ENCODE measurements at regions of chr17 and their contacts with region 1.

Region 1: GRCh38 chr17:40086150-40087044 is 14.0 kb downstream of the NR1D1 start:
- DNase-seq: peak; percentile 70
- H3K4me3 Mint-ChIP-seq: no peak overlapping the region
- H3K27ac Mint-ChIP-seq: no peak overlapping the region
- H3K4me1 Mint-ChIP-seq: no peaks in the 10 kb centered on the region
- H3K27me3 Mint-ChIP-seq: no peaks in the 10 kb centered on the region

Region 2: DNA sequence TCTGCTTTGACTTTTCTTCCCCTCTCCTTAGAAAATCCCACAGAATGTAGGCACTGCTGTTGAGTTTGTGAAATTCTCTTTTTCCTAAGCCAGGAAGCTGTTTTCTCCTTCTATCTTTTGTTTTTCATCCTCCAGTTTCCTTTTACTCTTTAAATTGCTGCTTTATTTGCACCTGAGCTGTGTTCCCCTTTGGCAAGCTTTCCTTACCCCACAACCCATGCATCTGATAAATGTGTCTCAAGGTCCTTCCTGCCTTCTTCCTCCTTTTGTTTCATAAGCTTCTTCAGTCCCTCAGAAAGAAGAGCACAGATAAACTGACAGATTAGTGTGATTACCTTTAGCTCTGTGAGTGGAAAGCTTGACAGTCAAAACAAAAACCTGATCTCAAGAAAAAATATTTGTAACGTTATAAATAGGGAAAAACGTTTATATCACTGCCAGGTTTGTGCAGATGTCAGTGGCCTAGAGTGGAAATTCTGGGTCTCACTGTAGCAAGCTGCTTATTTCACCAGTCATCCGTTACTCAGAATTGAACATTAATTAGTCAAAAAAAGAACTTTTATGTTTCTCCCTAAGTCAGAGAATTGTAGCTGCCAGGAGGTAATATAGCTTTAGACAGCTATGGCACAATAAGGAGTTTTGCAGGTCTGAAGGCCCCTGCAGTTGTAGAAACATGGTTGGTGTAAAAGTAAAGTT is 191.6 kb before region 1 on chr17:
- CTCF ChIA-PET with region 1: no interaction called
- DNase-seq: no peak
- H3K4me3 Mint-ChIP-seq: no peak overlapping the region
- H3K27ac Mint-ChIP-seq: no peak overlapping the region
- H3K4me1 Mint-ChIP-seq: peaks cover 6% of the 10 kb centered on the region
- H3K27me3 Mint-ChIP-seq: peaks cover 19% of the 10 kb centered on the region

Region 3: DNA sequence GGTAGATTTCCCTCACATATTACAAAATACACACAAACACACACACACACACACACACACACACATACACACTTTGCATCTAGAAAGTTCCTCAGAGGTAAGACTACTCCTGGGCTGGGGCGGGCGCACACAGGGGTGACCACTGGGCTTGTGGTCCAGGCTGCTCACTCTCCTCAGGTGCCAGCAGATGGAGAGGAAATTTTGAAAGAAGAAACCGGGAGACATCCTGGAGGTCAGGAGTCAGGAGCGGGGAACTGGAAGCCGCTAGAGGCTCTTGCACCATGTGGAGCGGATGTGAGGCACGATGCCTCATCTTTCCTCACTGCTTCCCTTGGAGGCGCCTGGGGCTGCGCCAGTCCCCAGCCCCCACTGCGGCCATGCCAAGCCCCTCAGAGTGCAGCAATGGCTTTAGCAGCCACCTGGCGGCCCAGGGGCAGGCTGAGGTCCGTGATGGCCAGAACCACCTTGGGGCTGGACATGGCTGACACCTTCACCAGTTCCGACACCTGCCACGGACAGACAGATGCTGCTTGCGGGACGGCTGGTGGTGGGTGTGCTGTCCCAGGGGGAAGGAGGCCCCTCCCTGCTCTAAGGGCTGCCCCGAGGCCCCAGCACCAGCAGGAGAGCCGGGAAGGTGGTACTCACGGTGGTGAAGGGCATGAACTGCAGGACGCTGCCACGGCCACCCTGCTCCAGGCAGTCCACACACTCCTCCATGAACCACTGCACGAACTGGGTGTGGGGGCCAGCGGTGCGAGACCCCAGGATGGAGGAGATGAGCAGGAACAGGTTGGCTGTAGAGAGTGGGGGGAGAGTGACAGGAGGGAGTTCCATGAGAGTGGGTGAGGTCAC is 67.0 kb before region 1 on chr17:
- CTCF ChIA-PET with region 1: interaction called, 18 read pairs
- DNase-seq: no peak
- H3K4me3 Mint-ChIP-seq: no peak overlapping the region
- H3K27ac Mint-ChIP-seq: peak overlapping the region; percentile 58
- H3K4me1 Mint-ChIP-seq: peaks cover 2% of the 10 kb centered on the region
- H3K27me3 Mint-ChIP-seq: peaks cover 11% of the 10 kb centered on the region

Region 4: GRCh38 chr17:40026816-40027613 is 59.4 kb before region 1 on chr17:
- CTCF ChIA-PET with region 1: interaction called, 11 read pairs
- DNase-seq: peak; percentile 84
- H3K4me3 Mint-ChIP-seq: no peak overlapping the region
- H3K27ac Mint-ChIP-seq: no peak overlapping the region
- H3K4me1 Mint-ChIP-seq: peaks cover 26% of the 10 kb centered on the region
- H3K27me3 Mint-ChIP-seq: no peaks in the 10 kb centered on the region

Region 5: GRCh38 chr17:40035162-40035559 is 51.2 kb before region 1 on chr17:
- CTCF ChIA-PET with region 1: interaction called, 10 read pairs
- DNase-seq: no peak
- H3K4me3 Mint-ChIP-seq: no peak overlapping the region
- H3K27ac Mint-ChIP-seq: no peak overlapping the region
- H3K4me1 Mint-ChIP-seq: no peaks in the 10 kb centered on the region
- H3K27me3 Mint-ChIP-seq: no peaks in the 10 kb centered on the region

Region 6: GRCh38 chr17:40062329-40063186 is 23.8 kb before region 1 on chr17 and contains the start of gene THRA:
- CTCF ChIA-PET with region 1: interaction called, 11 read pairs
- DNase-seq: peak; percentile 77
- H3K4me3 Mint-ChIP-seq: peak within 1 kb of the TSS; percentile 82
- H3K27ac Mint-ChIP-seq: peak within 1 kb of the TSS; percentile 24
- H3K4me1 Mint-ChIP-seq: peaks cover 39% of the 10 kb centered on the region
- H3K27me3 Mint-ChIP-seq: peaks cover 71% of the 10 kb centered on the region

Region 7: GRCh38 chr17:40075201-40075941 is 11.0 kb before region 1 on chr17:
- CTCF ChIA-PET with region 1: interaction called, 42 read pairs
- DNase-seq: peak; percentile 73
- H3K4me3 Mint-ChIP-seq: no peak overlapping the region
- H3K27ac Mint-ChIP-seq: peak overlapping the region; percentile 72
- H3K4me1 Mint-ChIP-seq: peaks cover 18% of the 10 kb centered on the region
- H3K27me3 Mint-ChIP-seq: peaks cover 3% of the 10 kb centered on the region

Region 8: GRCh38 chr17:40098846-40099618 is 12.6 kb after region 1 on chr17:
- CTCF ChIA-PET with region 1: interaction called, 10 read pairs
- DNase-seq: peak; percentile 99
- H3K4me3 Mint-ChIP-seq: peak overlapping the region; percentile 81
- H3K27ac Mint-ChIP-seq: peak overlapping the region; percentile 87
- H3K4me1 Mint-ChIP-seq: peaks cover 91% of the 10 kb centered on the region
- H3K27me3 Mint-ChIP-seq: peaks cover 26% of the 10 kb centered on the region